Naive thymus-derived CD4-positive, alpha-beta T cell (primary cell): ENCODE measurements at regions of chr21 and their contacts with region 1.

Region 1: GRCh38 chr21:32529679-32530078 is 55.6 kb downstream of the TCP10L start:
- DNase-seq: no peak
- ATAC-seq: no peak
- H3K4me3 ChIP-seq: no peak overlapping the region
- H3K4me3 Mint-ChIP-seq: no peak overlapping the region
- H3K27ac ChIP-seq: no peak overlapping the region
- H3K27ac Mint-ChIP-seq: no peak overlapping the region
- H3K4me1 ChIP-seq: no peaks in the 10 kb centered on the region
- H3K4me1 Mint-ChIP-seq: peaks cover 0 to 2% (median 0%) of the 10 kb centered on the region in 7 donors
- H3K27me3 ChIP-seq: no peaks in the 10 kb centered on the region
- H3K27me3 Mint-ChIP-seq: no peaks in the 10 kb centered on the region

Region 2: GRCh38 chr21:31623664-31624063 is 906.0 kb before region 1 on chr21:
- CTCF ChIA-PET with region 1: no interaction called
- POLR2A ChIA-PET with region 1: no interaction called
- intact Hi-C with region 1: loop called in 1 of 2 experiments (anchors 5 kb)
- DNase-seq: no peak
- ATAC-seq: no peak
- H3K4me3 ChIP-seq: no peak overlapping the region
- H3K4me3 Mint-ChIP-seq: no peak overlapping the region
- H3K27ac ChIP-seq: no peak overlapping the region
- H3K27ac Mint-ChIP-seq: no peak overlapping the region
- H3K4me1 ChIP-seq: no peaks in the 10 kb centered on the region
- H3K4me1 Mint-ChIP-seq: peaks cover 6 to 14% (median 8%) of the 10 kb centered on the region in 7 donors
- H3K27me3 ChIP-seq: no peaks in the 10 kb centered on the region
- H3K27me3 Mint-ChIP-seq: peaks cover 0 to 3% (median 0%) of the 10 kb centered on the region in 5 donors

Region 3: DNA sequence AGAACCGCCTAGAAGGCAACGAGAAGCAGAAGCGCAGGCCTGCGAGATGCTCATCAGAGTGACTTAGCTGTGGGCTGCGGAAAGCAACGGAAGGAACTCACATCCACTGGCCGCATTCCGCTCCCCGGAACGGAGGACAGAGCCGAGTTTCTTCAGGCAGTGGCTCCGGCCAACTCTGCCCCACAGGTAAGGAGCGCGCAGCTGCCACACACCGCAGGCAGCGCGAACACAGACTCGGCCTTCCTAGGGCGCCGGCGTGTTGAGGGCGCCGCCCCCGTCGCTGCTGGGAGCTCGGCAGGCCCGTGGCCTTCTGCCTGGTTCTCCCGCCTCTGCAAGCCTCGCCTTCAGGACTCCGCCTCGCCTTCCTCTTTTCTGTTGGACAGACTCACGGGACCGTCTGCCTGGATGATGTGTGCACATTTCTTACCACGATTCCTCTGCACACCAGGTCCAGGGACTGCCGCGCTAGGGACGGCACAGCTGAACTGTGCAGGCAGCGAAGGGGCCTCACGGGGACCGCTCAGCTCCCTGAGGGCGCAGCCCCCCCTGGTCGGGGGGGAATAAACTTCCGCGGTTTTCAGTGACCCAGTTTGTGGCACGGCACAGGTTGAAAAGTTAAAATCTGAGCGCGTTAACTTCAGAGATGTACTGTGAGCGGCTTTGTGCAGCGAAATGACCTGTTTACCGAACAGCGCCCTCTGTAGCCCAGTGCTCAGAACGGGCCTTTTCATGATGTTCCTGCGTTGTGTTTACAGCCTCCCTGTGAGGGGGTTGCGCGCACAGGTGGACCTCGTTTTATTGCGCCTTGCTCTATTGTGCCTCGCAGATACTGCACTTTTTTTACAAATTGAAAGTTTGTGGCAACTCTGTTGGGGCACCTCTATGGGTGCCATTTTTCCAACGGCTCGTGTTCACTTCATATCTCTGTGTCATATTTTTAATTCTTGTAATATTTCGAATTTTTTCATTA is 39.9 kb after region 1 on chr21:
- CTCF ChIA-PET with region 1: no interaction called
- POLR2A ChIA-PET with region 1: no interaction called
- intact Hi-C with region 1: no loop called
- DNase-seq: peak; percentile 56 to 80 (median 75)
- ATAC-seq: peak; percentile 96
- H3K4me3 ChIP-seq: peak overlapping the region; percentile 85
- H3K4me3 Mint-ChIP-seq: peak overlapping the region; percentile 82 to 95 (median 90)
- H3K27ac ChIP-seq: peak overlapping the region; percentile 65
- H3K27ac Mint-ChIP-seq: peak overlapping the region; percentile 46 to 90 (median 75)
- H3K4me1 ChIP-seq: peaks cover 5 to 7% of the 10 kb centered on the region in 2 donors
- H3K4me1 Mint-ChIP-seq: peaks cover 6 to 20% (median 17%) of the 10 kb centered on the region in 7 donors
- H3K27me3 ChIP-seq: no peaks in the 10 kb centered on the region
- H3K27me3 Mint-ChIP-seq: peaks cover 0 to 8% (median 0%) of the 10 kb centered on the region in 5 donors

Region 4: GRCh38 chr21:32682696-32683474 is 153.2 kb after region 1 on chr21:
- CTCF ChIA-PET with region 1: no interaction called
- POLR2A ChIA-PET with region 1: no interaction called
- intact Hi-C with region 1: no loop called
- DNase-seq: no peak
- ATAC-seq: no peak
- H3K4me3 ChIP-seq: no peak overlapping the region
- H3K4me3 Mint-ChIP-seq: no peak overlapping the region
- H3K27ac ChIP-seq: no peak overlapping the region
- H3K27ac Mint-ChIP-seq: peak overlapping the region in 1 of 9 donors; percentile 28
- H3K4me1 ChIP-seq: no peaks in the 10 kb centered on the region
- H3K4me1 Mint-ChIP-seq: peaks cover 0 to 4% (median 0%) of the 10 kb centered on the region in 7 donors
- H3K27me3 ChIP-seq: no peaks in the 10 kb centered on the region
- H3K27me3 Mint-ChIP-seq: no peaks in the 10 kb centered on the region

Region 5: GRCh38 chr21:32803651-32804050 is 274.0 kb after region 1 on chr21:
- CTCF ChIA-PET with region 1: no interaction called
- POLR2A ChIA-PET with region 1: no interaction called
- intact Hi-C with region 1: no loop called
- DNase-seq: no peak
- ATAC-seq: no peak
- H3K4me3 ChIP-seq: no peak overlapping the region
- H3K4me3 Mint-ChIP-seq: no peak overlapping the region
- H3K27ac ChIP-seq: no peak overlapping the region
- H3K27ac Mint-ChIP-seq: peak overlapping the region in 1 of 9 donors; percentile 14
- H3K4me1 ChIP-seq: no peaks in the 10 kb centered on the region
- H3K4me1 Mint-ChIP-seq: peaks cover 9 to 20% (median 13%) of the 10 kb centered on the region in 7 donors
- H3K27me3 ChIP-seq: no peaks in the 10 kb centered on the region
- H3K27me3 Mint-ChIP-seq: peaks cover 0 to 6% (median 0%) of the 10 kb centered on the region in 5 donors